Activated CD4-positive, alpha-beta memory T cell treated with anti-CD3 and anti-CD28 coated beads, Interleukin-2, amount 10 ng/mL, durations not matched to agents 7 days and 5 days (primary cell): ENCODE measurements at regions of chr14 and their contacts with region 1.

Region 1: GRCh38 chr14:75293920-75294642 is 15.5 kb downstream of the FOS start:
- DNase-seq: peak; percentile 95
- H3K4me3 Mint-ChIP-seq: peak overlapping the region; percentile 75
- H3K27ac Mint-ChIP-seq: peak overlapping the region; percentile 47
- H3K4me1 Mint-ChIP-seq: peaks cover 23% of the 10 kb centered on the region
- H3K27me3 Mint-ChIP-seq: peaks cover 27% of the 10 kb centered on the region

Region 2: GRCh38 chr14:75126679-75127473 is 167.2 kb before region 1 on chr14 and contains the start of gene NEK9:
- CTCF ChIA-PET with region 1: interaction called, 216 read pairs
- POLR2A ChIA-PET with region 1: interaction called, 23 read pairs
- DNase-seq: peak; percentile 91
- H3K4me3 Mint-ChIP-seq: peak within 1 kb of the TSS; percentile 82
- H3K27ac Mint-ChIP-seq: peak within 1 kb of the TSS; percentile 86
- H3K4me1 Mint-ChIP-seq: peaks cover 39% of the 10 kb centered on the region
- H3K27me3 Mint-ChIP-seq: no peaks in the 10 kb centered on the region
- total RNA-seq, gene NEK9: 72.0 to 77.3 TPM

Region 3: DNA sequence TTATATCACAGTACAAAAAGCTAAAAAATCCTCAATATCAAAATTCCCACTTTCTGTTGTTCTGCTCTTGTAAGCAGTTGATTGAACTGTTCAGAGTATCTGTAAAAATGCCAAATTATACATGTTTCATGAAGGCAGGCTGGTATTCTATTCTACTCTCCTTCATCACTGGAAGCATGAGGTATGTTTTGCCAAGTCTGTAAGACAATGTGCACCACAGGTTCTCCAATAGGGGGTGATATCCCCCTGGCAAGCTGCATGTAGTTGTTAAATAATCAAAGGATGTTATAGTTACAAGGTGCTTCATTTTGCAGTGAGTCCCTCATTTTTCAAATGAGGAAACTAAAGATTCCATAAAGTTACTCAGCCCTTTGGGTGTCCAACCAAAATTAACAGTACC is 152.1 kb before region 1 on chr14:
- CTCF ChIA-PET with region 1: interaction called, 53 read pairs
- POLR2A ChIA-PET with region 1: interaction called, 3 read pairs
- DNase-seq: peak; percentile 31
- H3K4me3 Mint-ChIP-seq: no peak overlapping the region
- H3K27ac Mint-ChIP-seq: no peak overlapping the region
- H3K4me1 Mint-ChIP-seq: peaks cover 58% of the 10 kb centered on the region
- H3K27me3 Mint-ChIP-seq: no peaks in the 10 kb centered on the region

Region 4: DNA sequence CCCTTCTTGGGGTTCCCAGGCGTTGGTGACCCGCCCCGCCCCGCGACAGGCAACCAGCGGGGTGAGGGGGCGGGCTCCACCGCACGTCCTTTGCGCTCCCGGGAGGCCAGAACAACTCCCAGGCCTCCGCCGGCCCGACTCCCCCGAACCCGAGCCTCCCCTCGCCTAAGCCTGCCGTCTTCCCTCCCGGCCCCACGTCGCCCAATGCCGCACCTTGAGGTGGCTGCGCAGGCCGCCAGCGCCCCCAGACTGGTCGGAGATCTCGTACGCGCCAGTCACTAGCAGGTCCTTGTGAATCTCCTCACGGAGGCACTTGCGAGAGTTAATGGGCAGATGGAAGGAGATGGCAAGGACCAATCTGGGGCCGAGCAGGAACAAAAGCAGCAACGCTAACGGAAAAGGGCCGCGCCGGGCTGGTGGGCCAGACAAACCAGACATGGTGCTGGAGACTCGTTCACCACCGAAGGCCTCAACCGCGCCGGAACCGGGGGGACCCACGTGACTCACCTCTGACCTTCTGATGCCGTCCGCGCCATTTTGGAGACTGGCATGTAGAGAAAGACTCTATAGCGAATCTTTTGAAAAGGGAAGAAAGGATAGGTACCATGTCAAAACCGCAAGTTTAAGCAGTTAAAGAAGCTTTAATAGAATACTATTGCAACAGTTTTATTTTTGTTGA is 117.8 kb before region 1 on chr14 and contains the start of gene TMED10:
- CTCF ChIA-PET with region 1: interaction called, 3 read pairs
- POLR2A ChIA-PET with region 1: interaction called, 12 read pairs
- DNase-seq: peak; percentile 93
- H3K4me3 Mint-ChIP-seq: peak within 1 kb of the TSS; percentile 81
- H3K27ac Mint-ChIP-seq: peak within 1 kb of the TSS; percentile 85
- H3K4me1 Mint-ChIP-seq: peaks cover 36% of the 10 kb centered on the region
- H3K27me3 Mint-ChIP-seq: peaks cover 5% of the 10 kb centered on the region
- total RNA-seq, gene TMED10: 207 to 224 TPM

Region 5: DNA sequence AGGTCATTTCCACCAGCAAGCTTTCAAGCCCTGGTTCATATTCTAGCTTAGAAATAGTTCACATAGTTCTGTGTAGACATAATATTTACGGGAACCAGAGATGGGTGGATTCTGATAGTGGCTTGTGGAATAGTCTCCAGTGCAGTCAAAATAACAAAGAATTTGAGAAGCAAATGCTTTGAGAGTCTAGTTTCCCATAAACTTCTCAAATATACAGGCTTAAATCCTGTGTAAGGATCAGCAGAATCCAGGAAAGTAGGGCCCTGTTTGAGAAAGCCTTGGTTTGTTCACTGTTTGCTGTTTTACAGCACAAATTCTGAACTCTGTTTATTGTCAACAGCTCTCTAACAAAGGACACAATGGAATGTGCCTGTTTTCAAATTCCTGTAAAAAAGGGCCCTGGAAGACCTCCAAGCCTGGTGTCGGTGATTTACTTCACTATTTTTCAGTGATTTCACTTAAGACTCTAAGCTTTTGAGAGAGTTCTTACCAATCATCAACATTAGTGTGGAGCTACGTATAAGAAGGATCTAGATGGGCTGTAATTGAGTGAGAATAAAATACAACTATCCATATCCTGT is 26.9 kb before region 1 on chr14:
- CTCF ChIA-PET with region 1: interaction called, 11 read pairs
- POLR2A ChIA-PET with region 1: interaction called, 3 read pairs
- DNase-seq: no peak
- H3K4me3 Mint-ChIP-seq: no peak overlapping the region
- H3K27ac Mint-ChIP-seq: no peak overlapping the region
- H3K4me1 Mint-ChIP-seq: no peaks in the 10 kb centered on the region
- H3K27me3 Mint-ChIP-seq: peaks cover 53% of the 10 kb centered on the region

Region 6: GRCh38 chr14:75277000-75277801 is 16.9 kb before region 1 on chr14:
- CTCF ChIA-PET with region 1: interaction called, 16 read pairs
- POLR2A ChIA-PET with region 1: interaction called, 3 read pairs
- DNase-seq: peak; percentile 77
- H3K4me3 Mint-ChIP-seq: peak overlapping the region; percentile 74
- H3K27ac Mint-ChIP-seq: peak overlapping the region; percentile 36
- H3K4me1 Mint-ChIP-seq: peaks cover 49% of the 10 kb centered on the region
- H3K27me3 Mint-ChIP-seq: peaks cover 79% of the 10 kb centered on the region